Naive thymus-derived CD4-positive, alpha-beta T cell (primary cell): ENCODE measurements at regions of chr16 and their contacts with region 1.

Region 1: DNA sequence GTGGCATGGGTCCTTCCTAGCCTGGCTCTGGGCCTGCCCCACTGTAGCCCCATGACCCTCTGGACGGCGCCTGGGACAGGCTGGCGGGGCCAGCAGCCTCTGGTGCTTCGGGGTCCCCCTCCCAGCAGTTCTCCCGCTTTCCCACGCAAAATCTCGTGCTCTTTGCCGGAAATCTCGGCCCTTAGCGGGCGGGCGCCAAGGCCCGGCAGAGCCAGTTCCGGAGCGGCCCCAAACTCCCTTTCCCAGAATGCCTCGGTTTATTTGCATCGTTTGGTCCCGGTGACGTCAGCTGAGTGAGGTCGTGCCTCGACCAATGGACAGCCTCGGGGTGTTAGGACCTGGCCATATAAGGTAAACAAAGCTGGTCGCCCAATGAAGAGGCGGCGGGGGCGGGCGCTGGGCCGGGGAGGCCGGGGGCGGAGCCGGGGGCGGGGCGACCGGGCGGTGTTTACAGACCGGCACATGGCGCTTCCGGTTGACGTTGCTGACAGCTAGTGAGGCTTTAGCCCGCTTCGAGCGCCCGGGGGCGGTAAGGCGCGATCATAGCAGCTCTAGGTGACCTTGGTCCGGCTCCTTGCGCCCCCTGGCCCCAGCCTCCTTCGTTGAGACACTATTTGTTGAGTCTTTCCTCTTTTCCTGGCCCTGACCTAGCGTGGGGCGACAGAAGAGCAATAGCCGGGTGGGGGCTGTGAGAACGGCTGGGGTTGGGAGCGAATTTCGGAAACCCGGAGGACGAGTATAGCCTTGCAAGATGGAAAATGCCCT is 1.5 kb upstream of the UBALD1 start:
- DNase-seq: peak; percentile 93 to 100 (median 98)
- ATAC-seq: peak; percentile 94
- H3K4me3 ChIP-seq: peak overlapping the region; percentile 95
- H3K4me3 Mint-ChIP-seq: peak overlapping the region; percentile 94 to 99 (median 98)
- H3K27ac ChIP-seq: peak overlapping the region; percentile 98
- H3K27ac Mint-ChIP-seq: peak overlapping the region; percentile 96 to 100 (median 99)
- H3K4me1 ChIP-seq: peaks cover 28 to 37% of the 10 kb centered on the region in 2 donors
- H3K4me1 Mint-ChIP-seq: peaks cover 8 to 43% (median 24%) of the 10 kb centered on the region in 7 donors
- H3K27me3 ChIP-seq: no peaks in the 10 kb centered on the region
- H3K27me3 Mint-ChIP-seq: no peaks in the 10 kb centered on the region

Region 2: DNA sequence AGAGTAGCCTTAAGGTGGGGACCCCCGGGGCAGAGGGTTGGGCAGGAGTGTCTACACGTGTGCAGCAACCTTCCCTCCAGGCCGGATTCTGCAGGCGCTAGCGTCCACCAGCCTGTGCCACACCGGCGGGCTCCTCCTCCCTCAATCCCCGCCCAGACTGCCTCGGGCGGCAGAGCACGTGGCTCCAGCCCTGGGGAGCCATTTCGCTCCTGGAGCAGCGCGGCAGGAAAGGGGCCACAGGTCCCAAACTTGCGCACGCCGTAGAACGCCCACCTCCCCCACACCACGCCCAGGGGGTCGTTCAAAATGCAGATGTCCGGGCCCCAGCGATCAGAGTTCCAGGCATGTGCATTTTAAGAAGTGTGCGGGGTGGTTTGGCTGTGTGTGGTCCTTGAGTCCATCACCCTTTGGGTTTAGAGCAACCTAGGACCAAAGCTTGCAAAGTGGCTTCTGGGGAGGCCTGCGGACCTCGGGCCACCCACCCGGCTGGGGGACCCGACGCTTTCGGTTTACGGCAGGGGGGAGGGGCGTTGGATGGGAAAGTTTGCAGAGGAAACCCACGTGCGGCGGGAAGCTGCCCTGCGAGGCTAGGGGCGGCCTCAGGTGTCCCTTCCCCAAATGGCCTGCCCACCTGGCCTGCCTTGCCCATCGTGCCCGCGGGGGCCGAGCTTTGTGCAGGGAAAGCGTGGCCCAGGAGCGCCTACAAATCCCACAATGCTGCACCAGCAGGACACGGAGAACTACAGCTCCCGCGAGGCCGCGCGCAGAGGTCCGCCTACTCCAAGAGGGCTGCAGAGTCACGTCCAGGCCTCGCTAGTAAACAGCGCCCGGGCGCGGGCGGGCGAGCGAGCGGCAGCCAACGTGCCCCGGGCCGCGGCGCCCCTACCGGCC is 344.8 kb before region 1 on chr16:
- CTCF ChIA-PET with region 1: no interaction called
- POLR2A ChIA-PET with region 1: interaction called, 3 read pairs
- intact Hi-C with region 1: loop called (anchors 1 kb)
- DNase-seq: peak; percentile 68 to 90 (median 84)
- ATAC-seq: peak; percentile 89
- H3K4me3 ChIP-seq: peak overlapping the region; percentile 99
- H3K4me3 Mint-ChIP-seq: peak overlapping the region; percentile 85 to 97 (median 92)
- H3K27ac ChIP-seq: peak overlapping the region; percentile 58
- H3K27ac Mint-ChIP-seq: peak overlapping the region; percentile 67 to 98 (median 83)
- H3K4me1 ChIP-seq: peaks cover 5 to 13% of the 10 kb centered on the region in 2 donors
- H3K4me1 Mint-ChIP-seq: peaks cover 8 to 23% (median 15%) of the 10 kb centered on the region in 7 donors
- H3K27me3 ChIP-seq: no peaks in the 10 kb centered on the region
- H3K27me3 Mint-ChIP-seq: no peaks in the 10 kb centered on the region

Region 3: GRCh38 chr16:4371357-4372000 is 244.8 kb before region 1 on chr16 and contains the start of gene VASN:
- CTCF ChIA-PET with region 1: no interaction called
- POLR2A ChIA-PET with region 1: no interaction called
- intact Hi-C with region 1: loop called in 1 of 2 experiments (anchors 1 kb)
- DNase-seq: peak; percentile 68 to 84 (median 78)
- ATAC-seq: peak; percentile 89
- H3K4me3 ChIP-seq: peak within 1 kb of the TSS; percentile 51
- H3K4me3 Mint-ChIP-seq: peak within 1 kb of the TSS; percentile 61 to 88 (median 81)
- H3K27ac ChIP-seq: peak within 1 kb of the TSS; percentile 58
- H3K27ac Mint-ChIP-seq: peak within 1 kb of the TSS in 6 of 9 donors; percentile 43 to 74 (median 66)
- H3K4me1 ChIP-seq: peaks cover 15 to 19% of the 10 kb centered on the region in 2 donors
- H3K4me1 Mint-ChIP-seq: peaks cover 0 to 24% (median 12%) of the 10 kb centered on the region in 7 donors
- H3K27me3 ChIP-seq: no peaks in the 10 kb centered on the region
- H3K27me3 Mint-ChIP-seq: no peaks in the 10 kb centered on the region
- total RNA-seq, gene VASN: 0.24 to 1.3 (median 0.45) TPM in 4 of 5 experiments, not detected in the other

Region 4: DNA sequence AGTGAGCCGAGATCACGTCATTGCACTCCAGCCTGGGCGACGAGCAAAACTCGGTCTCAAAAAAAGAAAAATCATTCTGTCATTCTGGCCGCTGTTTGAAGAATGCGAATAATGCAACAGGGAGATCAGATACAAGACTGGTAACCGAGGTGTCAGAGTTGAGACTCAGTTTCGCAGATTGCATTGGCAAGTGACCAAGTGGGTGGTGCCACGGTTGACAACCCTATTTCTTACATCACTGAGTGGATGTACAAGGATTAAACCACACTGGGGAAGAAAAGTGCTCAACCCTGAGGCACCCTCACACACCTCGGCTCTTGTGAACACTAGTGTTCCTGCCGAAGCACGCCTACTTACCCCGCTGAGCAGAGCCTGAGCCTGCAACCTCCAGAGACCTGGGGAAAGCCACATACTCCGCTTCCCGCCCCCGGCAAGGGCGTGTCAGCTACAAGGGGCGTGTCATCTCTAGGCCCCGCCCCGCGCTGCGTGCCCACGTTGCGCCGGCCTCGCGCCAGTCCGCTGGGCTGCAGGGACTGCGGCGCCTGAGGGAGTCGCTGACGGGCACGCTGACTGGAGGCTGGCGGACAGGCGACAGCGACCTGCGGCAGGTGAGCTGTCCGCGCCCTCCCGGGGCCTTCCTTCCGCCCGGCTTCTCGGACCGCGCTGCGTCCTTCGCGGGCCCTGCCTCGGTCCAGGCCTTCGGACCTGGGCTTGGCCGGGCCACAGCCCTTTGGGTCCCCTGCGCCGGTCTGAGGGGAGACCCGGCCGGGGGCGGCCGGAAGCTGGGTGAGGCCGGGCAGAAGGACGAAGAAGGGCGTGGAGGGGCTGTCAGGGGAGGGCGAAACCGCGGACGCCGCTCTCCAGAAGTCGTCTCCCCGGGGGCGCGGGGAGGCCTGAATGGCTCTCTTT is 140.1 kb before region 1 on chr16 and contains the start of gene HMOX2:
- CTCF ChIA-PET with region 1: interaction called, 3 read pairs
- POLR2A ChIA-PET with region 1: interaction called, 4 read pairs
- intact Hi-C with region 1: loop called (anchors 1 to 2 kb)
- DNase-seq: peak; percentile 85 to 98 (median 92)
- ATAC-seq: peak; percentile 95
- H3K4me3 ChIP-seq: peak within 1 kb of the TSS; percentile 89
- H3K4me3 Mint-ChIP-seq: peak within 1 kb of the TSS; percentile 90 to 96 (median 94)
- H3K27ac ChIP-seq: peak within 1 kb of the TSS; percentile 92
- H3K27ac Mint-ChIP-seq: peak within 1 kb of the TSS; percentile 83 to 95 (median 91)
- H3K4me1 ChIP-seq: peaks cover 29 to 38% of the 10 kb centered on the region in 2 donors
- H3K4me1 Mint-ChIP-seq: peaks cover 25 to 53% (median 40%) of the 10 kb centered on the region in 7 donors
- H3K27me3 ChIP-seq: no peaks in the 10 kb centered on the region
- H3K27me3 Mint-ChIP-seq: no peaks in the 10 kb centered on the region
- total RNA-seq, gene HMOX2: 44.6 to 84.9 (median 61.0) TPM

Region 5: GRCh38 chr16:4580245-4580644 is 36.0 kb before region 1 on chr16:
- CTCF ChIA-PET with region 1: no interaction called
- POLR2A ChIA-PET with region 1: no interaction called
- intact Hi-C with region 1: loop called in 1 of 2 experiments (anchors 1 kb)
- DNase-seq: no peak
- ATAC-seq: no peak
- H3K4me3 ChIP-seq: no peak overlapping the region
- H3K4me3 Mint-ChIP-seq: no peak overlapping the region
- H3K27ac ChIP-seq: no peak overlapping the region
- H3K27ac Mint-ChIP-seq: no peak overlapping the region
- H3K4me1 ChIP-seq: no peaks in the 10 kb centered on the region
- H3K4me1 Mint-ChIP-seq: no peaks in the 10 kb centered on the region
- H3K27me3 ChIP-seq: no peaks in the 10 kb centered on the region
- H3K27me3 Mint-ChIP-seq: no peaks in the 10 kb centered on the region

Region 6: DNA sequence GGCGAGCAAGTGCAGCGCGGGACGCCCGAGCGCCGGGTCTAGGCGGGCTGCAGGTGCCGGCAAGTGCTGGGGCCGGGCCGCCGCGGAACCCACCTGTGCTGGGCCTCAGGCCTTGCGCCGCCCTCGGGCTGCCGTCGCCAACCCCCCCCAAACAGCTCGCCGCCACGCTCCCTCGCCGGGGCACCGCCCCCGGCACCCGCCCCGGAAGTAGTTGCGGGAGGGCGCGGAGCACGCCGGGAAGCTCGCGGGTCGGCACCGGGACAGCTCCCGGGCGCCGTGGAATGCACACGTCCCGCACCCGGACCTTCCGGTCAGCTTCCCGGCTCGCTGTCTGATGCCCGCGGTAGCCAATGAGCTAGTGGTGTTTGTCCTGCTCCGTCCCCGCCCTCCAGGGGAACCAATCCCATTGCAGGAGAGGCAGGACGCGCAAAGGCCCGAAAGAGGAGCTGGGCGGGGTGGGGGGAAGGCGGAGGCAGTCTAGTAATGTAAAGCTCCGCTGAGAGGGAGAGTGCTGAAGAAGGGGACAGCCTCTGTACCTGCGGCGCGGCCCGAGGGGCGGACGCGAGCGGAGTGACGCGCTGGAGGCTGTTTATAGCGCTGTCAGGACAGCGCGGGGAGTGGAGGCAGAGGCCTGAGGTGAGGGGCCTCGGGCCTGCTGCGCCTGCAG is 118.0 kb after region 1 on chr16 and contains the starts of genes ANKS3 and DNAAF8:
- CTCF ChIA-PET with region 1: interaction called, 4 read pairs
- POLR2A ChIA-PET with region 1: interaction called, 17 read pairs
- intact Hi-C with region 1: loop called (anchors 1 kb)
- DNase-seq: peak; percentile 72 to 90 (median 79)
- ATAC-seq: peak; percentile 86
- H3K4me3 ChIP-seq: peak within 1 kb of the TSS; percentile 98
- H3K4me3 Mint-ChIP-seq: peak within 1 kb of the TSS; percentile 84 to 96 (median 92)
- H3K27ac ChIP-seq: peak within 1 kb of the TSS; percentile 79
- H3K27ac Mint-ChIP-seq: peak within 1 kb of the TSS; percentile 73 to 92 (median 90)
- H3K4me1 ChIP-seq: peaks cover 6 to 9% of the 10 kb centered on the region in 2 donors
- H3K4me1 Mint-ChIP-seq: peaks cover 9 to 32% (median 20%) of the 10 kb centered on the region in 7 donors
- H3K27me3 ChIP-seq: no peaks in the 10 kb centered on the region
- H3K27me3 Mint-ChIP-seq: peaks cover 0 to 3% (median 0%) of the 10 kb centered on the region in 5 donors
- total RNA-seq, gene ANKS3: 17.6 to 32.7 (median 25.3) TPM
- total RNA-seq, gene DNAAF8: 0.11 to 0.57 (median 0.27) TPM

Region 7: GRCh38 chr16:4846891-4847773 is 230.9 kb after region 1 on chr16 and contains the starts of genes GLYR1 and UBN1:
- CTCF ChIA-PET with region 1: no interaction called
- POLR2A ChIA-PET with region 1: no interaction called
- intact Hi-C with region 1: loop called in 1 of 2 experiments (anchors 1 kb)
- DNase-seq: peak; percentile 99 to 100 (median 99)
- ATAC-seq: peak; percentile 95
- H3K4me3 ChIP-seq: peak within 1 kb of the TSS; percentile 84
- H3K4me3 Mint-ChIP-seq: peak within 1 kb of the TSS; percentile 86 to 96 (median 91)
- H3K27ac ChIP-seq: peak within 1 kb of the TSS; percentile 99
- H3K27ac Mint-ChIP-seq: peak within 1 kb of the TSS; percentile 74 to 94 (median 90)
- H3K4me1 ChIP-seq: peaks cover 30 to 38% of the 10 kb centered on the region in 2 donors
- H3K4me1 Mint-ChIP-seq: peaks cover 52 to 66% (median 58%) of the 10 kb centered on the region in 7 donors
- H3K27me3 ChIP-seq: no peaks in the 10 kb centered on the region
- H3K27me3 Mint-ChIP-seq: no peaks in the 10 kb centered on the region
- total RNA-seq, gene GLYR1: 98.7 to 122 (median 108) TPM
- total RNA-seq, gene UBN1: 39.5 to 58.7 (median 42.4) TPM

Region 8: GRCh38 chr16:5581908-5582307 is 965.7 kb after region 1 on chr16:
- CTCF ChIA-PET with region 1: no interaction called
- POLR2A ChIA-PET with region 1: no interaction called
- intact Hi-C with region 1: no loop called
- DNase-seq: no peak
- ATAC-seq: no peak
- H3K4me3 ChIP-seq: no peak overlapping the region
- H3K4me3 Mint-ChIP-seq: no peak overlapping the region
- H3K27ac ChIP-seq: no peak overlapping the region
- H3K27ac Mint-ChIP-seq: no peak overlapping the region
- H3K4me1 ChIP-seq: no peaks in the 10 kb centered on the region
- H3K4me1 Mint-ChIP-seq: peaks cover 0 to 2% (median 0%) of the 10 kb centered on the region in 7 donors
- H3K27me3 ChIP-seq: peaks cover 0 to 3% of the 10 kb centered on the region in 2 donors
- H3K27me3 Mint-ChIP-seq: peaks cover 0 to 37% (median 8%) of the 10 kb centered on the region in 5 donors